Common myeloid progenitor, CD34-positive (primary cell): ENCODE measurements at regions of chr7 and their contacts with region 1.

Region 1: GRCh38 chr7:66681491-66682349 is 53.0 kb downstream of the KCTD7 start:
- DNase-seq: peak; percentile 93 to 98 (median 97)
- H3K4me3 ChIP-seq: peak overlapping the region; percentile 78 to 92 (median 87)
- H3K27ac ChIP-seq: peak overlapping the region; percentile 81 to 92
- H3K4me1 ChIP-seq: peaks cover 0 to 12% (median 9%) of the 10 kb centered on the region in 4 experiments
- H3K27me3 ChIP-seq: no peaks in the 10 kb centered on the region

Region 2: GRCh38 chr7:66779669-66780409 is 98.1 kb after region 1 on chr7:
- CTCF ChIA-PET with region 1: no interaction called
- POLR2A ChIA-PET with region 1: no interaction called
- DNase-seq: no peak
- H3K4me3 ChIP-seq: no peak overlapping the region
- H3K27ac ChIP-seq: no peak overlapping the region
- H3K4me1 ChIP-seq: peaks cover 0 to 2% (median 0%) of the 10 kb centered on the region in 4 experiments
- H3K27me3 ChIP-seq: no peaks in the 10 kb centered on the region

Region 3: DNA sequence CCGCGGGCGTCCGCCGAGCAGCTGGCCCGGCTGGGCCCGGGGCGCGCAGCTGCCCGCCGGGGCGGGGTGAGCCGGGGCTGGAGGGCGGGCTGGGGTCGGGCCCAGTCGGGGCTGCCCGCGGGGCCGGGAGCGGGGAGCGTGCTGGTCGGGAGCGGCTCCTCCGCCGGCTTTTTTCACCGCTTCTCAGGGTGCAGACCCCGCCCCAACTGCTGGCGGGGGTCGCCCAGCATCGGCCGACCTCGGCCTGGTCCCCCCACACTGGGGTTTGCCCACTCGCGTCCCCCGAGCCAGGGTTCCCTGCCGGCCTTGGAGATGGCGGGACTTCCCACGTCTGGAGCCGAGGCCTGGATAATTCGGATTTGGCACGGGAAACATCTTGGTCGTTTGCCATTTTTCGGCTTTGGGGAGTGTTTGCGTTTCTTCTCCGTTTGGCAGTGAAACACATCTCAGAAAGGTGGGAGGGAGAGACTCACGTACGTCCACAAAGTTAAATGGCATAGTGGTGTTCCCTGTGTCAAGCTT is 239.7 kb after region 1 on chr7:
- CTCF ChIA-PET with region 1: no interaction called
- POLR2A ChIA-PET with region 1: interaction called, 11 read pairs
- DNase-seq: peak; percentile 14 to 53 (median 48)
- H3K4me3 ChIP-seq: peak overlapping the region; percentile 64 to 99 (median 98)
- H3K27ac ChIP-seq: peak overlapping the region; percentile 69 to 93
- H3K4me1 ChIP-seq: peaks cover 7 to 28% (median 15%) of the 10 kb centered on the region in 4 experiments
- H3K27me3 ChIP-seq: no peaks in the 10 kb centered on the region